PC-9 (cell line): ENCODE measurements at regions of chr1 and their contacts with region 1.

Region 1: DNA sequence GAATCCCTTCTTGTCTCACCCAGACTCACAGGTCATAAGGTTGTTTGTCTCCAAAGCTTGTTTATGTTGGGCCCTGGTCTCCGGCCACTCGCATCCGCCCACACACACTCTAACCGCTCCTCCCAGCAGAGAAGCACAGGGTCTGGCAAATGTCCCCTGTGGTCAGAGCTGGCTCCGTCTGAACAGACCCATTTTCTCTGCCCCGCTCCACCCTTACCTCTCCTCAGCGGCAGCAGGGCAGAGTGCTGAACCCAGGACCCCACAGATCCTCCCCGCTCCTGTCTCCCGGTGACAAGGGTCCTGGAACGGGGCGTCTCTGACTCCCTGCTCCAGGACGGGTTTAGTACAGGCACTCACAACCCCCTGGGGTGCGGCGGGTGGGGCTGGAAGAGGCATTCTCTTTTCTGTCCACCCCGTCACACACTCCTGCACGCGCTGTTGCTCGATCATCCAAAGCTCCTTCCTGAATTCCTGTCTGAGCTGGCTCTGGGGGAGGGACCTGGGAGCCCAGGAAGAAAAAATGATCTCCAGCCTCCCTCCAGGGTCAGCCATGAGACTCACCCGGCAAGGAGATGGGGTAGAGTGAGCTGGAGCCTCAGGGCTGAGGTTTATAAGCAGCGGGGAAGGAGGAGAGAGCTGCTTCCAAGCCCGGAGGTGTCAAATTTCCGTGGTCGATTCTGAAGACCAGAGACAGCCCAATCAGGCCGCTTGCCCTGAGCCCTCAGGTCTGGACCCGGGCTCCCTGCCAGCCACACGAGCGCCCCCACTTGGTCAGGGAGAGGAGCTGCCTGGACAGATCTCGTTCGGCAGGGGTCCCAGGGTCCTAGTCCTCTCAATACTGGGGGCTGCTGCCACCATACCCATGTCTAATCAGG is at the start of gene S100A13:
- DNase-seq: peak; percentile 91 to 95
- H3K4me3 ChIP-seq: peak within 1 kb of the TSS; percentile 69
- H3K27ac ChIP-seq: peak within 1 kb of the TSS; percentile 88
- H3K4me1 ChIP-seq: peaks cover 31% of the 10 kb centered on the region
- H3K27me3 ChIP-seq: no peaks in the 10 kb centered on the region
- CTCF ChIP-seq: peak; percentile 93
- total RNA-seq, gene S100A13: 120 and 144 TPM in 2 replicates

Region 2: GRCh38 chr1:153494976-153495535 is 132.1 kb before region 1 on chr1:
- CTCF ChIA-PET with region 1: no interaction called
- POLR2A ChIA-PET with region 1: no interaction called
- intact Hi-C with region 1: no loop called
- DNase-seq: peak in 1 of 2 experiments; percentile 72
- H3K4me3 ChIP-seq: no peak overlapping the region
- H3K27ac ChIP-seq: no peak overlapping the region
- H3K4me1 ChIP-seq: peaks cover 19% of the 10 kb centered on the region
- H3K27me3 ChIP-seq: no peaks in the 10 kb centered on the region
- CTCF ChIP-seq: peak; percentile 98

Region 3: GRCh38 chr1:153510984-153511410 is 116.2 kb before region 1 on chr1:
- CTCF ChIA-PET with region 1: interaction called, 6 read pairs
- POLR2A ChIA-PET with region 1: interaction called, 12 read pairs
- intact Hi-C with region 1: loop called (anchors 2 kb)
- DNase-seq: peak; percentile 52 to 82
- H3K4me3 ChIP-seq: no peak overlapping the region
- H3K27ac ChIP-seq: no peak overlapping the region
- H3K4me1 ChIP-seq: peaks cover 51% of the 10 kb centered on the region
- H3K27me3 ChIP-seq: no peaks in the 10 kb centered on the region
- CTCF ChIP-seq: peak; percentile 96

Region 4: DNA sequence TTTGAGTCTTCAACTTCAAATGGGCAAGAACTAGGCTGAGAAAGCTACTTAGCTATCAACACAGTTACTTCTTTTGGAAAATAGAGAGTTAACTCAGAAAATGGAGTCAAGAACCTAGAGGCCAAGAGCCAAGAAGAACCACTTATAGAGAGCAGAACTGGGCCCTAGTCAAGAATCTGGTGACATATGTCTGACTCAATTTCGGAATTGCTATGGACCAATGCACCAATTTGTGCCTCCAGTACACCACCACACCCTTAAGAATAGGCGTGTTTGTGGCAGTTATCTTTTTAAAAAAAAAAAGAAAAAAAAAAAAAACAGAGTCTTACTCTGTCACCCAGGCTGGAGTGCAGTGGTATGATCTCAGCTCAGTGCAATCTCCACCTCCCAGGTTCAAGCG is 69.3 kb before region 1 on chr1:
- CTCF ChIA-PET with region 1: interaction called, 3 read pairs
- POLR2A ChIA-PET with region 1: interaction called, 21 read pairs
- intact Hi-C with region 1: no loop called
- DNase-seq: no peak
- H3K4me3 ChIP-seq: no peak overlapping the region
- H3K27ac ChIP-seq: no peak overlapping the region
- H3K4me1 ChIP-seq: peaks cover 8% of the 10 kb centered on the region; the same call in 1 of the 2 replicates
- H3K27me3 ChIP-seq: no peaks in the 10 kb centered on the region
- CTCF ChIP-seq: no peak

Region 5: DNA sequence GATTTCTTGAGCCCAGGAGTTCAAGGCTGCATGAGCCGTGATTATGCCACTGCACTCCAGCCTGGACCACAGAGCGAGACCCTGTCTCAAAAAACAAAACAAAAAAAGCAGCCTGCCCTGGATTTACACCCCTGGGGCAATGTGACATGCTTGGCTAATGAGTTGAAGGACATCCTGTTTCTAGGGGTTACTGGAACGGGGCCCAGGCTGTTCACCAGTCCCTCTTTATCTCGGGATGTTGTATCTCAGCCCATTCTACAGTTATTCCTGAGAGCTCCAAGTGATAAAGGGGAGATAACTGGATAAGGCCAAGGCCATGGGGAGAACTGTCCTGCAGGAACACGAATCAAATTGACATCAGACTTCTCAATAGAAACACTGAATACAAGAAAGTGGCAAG is 39.8 kb before region 1 on chr1:
- CTCF ChIA-PET with region 1: interaction called, 3 read pairs
- POLR2A ChIA-PET with region 1: interaction called, 12 read pairs
- intact Hi-C with region 1: no loop called
- DNase-seq: no peak
- H3K4me3 ChIP-seq: no peak overlapping the region
- H3K27ac ChIP-seq: no peak overlapping the region
- H3K4me1 ChIP-seq: peaks cover 17% of the 10 kb centered on the region
- H3K27me3 ChIP-seq: no peaks in the 10 kb centered on the region
- CTCF ChIP-seq: no peak

Region 6: DNA sequence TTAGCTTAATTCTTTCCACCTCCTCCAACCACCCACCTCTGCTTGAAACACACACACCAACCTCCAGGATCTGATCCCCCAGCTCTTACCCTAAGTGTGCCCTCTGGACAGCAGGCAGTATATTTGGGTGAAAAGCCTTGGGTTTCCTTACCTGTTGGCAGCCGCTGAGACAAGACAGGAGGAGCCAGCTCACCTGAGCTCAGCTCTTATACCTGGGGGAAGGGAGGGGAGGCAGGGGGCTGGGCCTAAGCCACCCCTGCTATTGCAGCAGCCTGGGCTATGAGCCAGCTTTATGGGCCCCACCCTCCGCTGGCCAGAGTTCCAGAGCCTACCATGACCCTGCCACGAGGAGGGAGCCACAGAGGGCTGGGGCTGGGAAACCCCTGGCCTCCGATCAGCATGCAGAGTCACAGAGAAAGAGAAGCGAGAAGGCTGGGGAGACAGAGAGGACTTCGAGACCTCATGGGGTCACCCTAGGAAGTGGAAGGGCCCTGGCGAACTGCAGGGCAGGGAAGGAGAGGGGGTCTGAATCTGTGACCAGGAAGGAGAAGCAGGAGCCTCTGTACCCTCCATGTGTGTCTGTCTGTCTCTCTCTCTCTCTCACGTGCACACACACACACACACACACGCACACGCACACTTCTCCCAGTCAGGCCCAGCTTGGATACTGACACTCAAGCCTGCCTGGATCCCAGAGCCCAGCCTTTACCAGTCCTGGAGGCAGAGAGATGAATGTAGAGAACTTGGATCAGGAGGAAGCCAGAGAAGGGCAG is 10.8 kb before region 1 on chr1 and contains the start of gene S100A14:
- CTCF ChIA-PET with region 1: interaction called, 19 read pairs
- POLR2A ChIA-PET with region 1: interaction called, 32 read pairs
- intact Hi-C with region 1: no loop called
- DNase-seq: peak; percentile 73 to 89
- H3K4me3 ChIP-seq: peak within 1 kb of the TSS; percentile 66
- H3K27ac ChIP-seq: peak within 1 kb of the TSS; percentile 56
- H3K4me1 ChIP-seq: peaks cover 44% of the 10 kb centered on the region
- H3K27me3 ChIP-seq: no peaks in the 10 kb centered on the region
- CTCF ChIP-seq: no peak
- total RNA-seq, gene S100A14: 411 and 486 TPM in 2 replicates

Region 7: DNA sequence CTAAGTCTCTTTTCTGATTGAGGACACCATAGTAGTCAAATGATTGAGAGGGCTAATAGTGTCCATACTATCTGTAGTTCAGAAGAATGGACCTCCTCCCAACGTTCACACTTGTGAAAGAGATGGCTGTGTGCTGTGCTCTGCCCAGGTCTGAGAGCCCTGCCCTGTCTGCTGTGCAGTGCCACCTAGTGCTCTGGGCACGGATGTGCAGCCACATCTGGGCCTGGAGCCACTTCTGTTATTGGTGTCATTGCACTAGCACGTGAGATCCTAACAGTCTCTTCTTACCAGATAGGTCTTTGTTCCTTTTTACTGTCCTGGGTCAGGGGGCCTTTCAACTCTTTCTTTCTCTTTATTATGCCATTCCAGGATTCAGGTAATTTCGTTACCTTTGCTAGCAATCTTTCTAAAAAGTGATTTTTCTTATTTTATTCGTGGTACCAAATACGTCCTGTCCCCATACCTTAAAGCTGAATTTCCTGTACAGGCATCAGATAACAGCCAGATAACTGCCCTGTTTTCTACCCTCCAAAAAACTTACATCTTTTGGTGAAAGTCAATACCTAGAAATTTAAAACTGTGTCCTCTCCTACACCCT is 122.3 kb after region 1 on chr1:
- CTCF ChIA-PET with region 1: interaction called, 11 read pairs
- POLR2A ChIA-PET with region 1: no interaction called
- intact Hi-C with region 1: no loop called
- DNase-seq: peak; percentile 66 to 73
- H3K4me3 ChIP-seq: no peak overlapping the region
- H3K27ac ChIP-seq: no peak overlapping the region
- H3K4me1 ChIP-seq: no peaks in the 10 kb centered on the region
- H3K27me3 ChIP-seq: no peaks in the 10 kb centered on the region
- CTCF ChIP-seq: peak; percentile 94

Region 8: GRCh38 chr1:153763365-153764225 is 136.4 kb after region 1 on chr1:
- CTCF ChIA-PET with region 1: no interaction called
- POLR2A ChIA-PET with region 1: no interaction called
- intact Hi-C with region 1: no loop called
- DNase-seq: no peak
- H3K4me3 ChIP-seq: no peak overlapping the region
- H3K27ac ChIP-seq: no peak overlapping the region
- H3K4me1 ChIP-seq: no peaks in the 10 kb centered on the region
- H3K27me3 ChIP-seq: no peaks in the 10 kb centered on the region
- CTCF ChIP-seq: no peak

Region 9: DNA sequence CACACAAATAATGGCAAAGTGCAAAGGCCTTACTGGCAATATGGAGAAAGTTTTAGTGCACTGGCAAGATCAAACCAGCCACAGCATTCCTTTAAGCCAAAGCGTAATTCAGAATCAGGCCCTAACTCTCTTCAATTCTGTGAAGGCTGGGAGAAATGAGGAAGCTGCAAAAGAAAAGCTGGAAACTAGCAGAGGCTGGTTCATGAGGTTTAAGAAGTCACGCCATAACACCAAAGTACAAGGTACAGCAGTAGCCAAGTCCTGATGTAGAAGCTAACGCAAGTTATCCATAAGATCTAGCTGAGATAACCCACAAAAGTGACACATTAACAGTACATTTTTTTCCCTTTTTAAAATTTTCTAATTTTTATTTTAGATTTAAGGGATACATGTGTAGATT is 205.1 kb after region 1 on chr1:
- CTCF ChIA-PET with region 1: no interaction called
- POLR2A ChIA-PET with region 1: no interaction called
- intact Hi-C with region 1: no loop called
- DNase-seq: no peak
- H3K4me3 ChIP-seq: no peak overlapping the region
- H3K27ac ChIP-seq: no peak overlapping the region
- H3K4me1 ChIP-seq: no peaks in the 10 kb centered on the region
- H3K27me3 ChIP-seq: no peaks in the 10 kb centered on the region
- CTCF ChIP-seq: no peak